IMR-90 (cell line): ENCODE measurements at regions of chr14 and their contacts with region 1.

Region 1: DNA sequence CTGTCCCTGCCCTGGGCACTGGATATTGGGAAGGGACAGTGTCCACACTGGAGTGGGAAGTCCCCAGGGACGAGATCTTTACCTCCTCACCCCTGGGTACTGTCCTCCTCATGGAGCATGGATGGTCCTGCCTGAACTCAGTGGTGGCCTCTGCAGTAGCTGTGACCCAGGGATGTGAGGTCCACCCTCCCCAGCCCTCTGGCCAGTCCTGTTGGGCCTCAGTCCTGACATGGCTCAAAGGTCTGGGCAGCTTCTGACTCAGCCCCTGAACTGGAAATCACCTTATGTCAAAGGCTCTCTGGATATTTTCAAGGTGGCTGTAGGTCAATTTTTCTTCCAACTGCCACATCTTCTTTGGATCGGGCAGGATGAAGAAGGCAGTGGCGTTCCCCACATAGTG is 24.4 kb downstream of the SERPINA1 start:
- DNase-seq: no peak
- ATAC-seq: no peak
- H3K4me3 ChIP-seq: no peak overlapping the region
- H3K27ac ChIP-seq: no peak overlapping the region
- H3K4me1 ChIP-seq: no peaks in the 10 kb centered on the region
- H3K27me3 ChIP-seq: no peaks in the 10 kb centered on the region; the same call in 1 of the 2 replicates
- CTCF ChIP-seq: no peak
- POLR2A ChIP-seq: no peak
- RAD21 ChIP-seq: no peak

Region 2: DNA sequence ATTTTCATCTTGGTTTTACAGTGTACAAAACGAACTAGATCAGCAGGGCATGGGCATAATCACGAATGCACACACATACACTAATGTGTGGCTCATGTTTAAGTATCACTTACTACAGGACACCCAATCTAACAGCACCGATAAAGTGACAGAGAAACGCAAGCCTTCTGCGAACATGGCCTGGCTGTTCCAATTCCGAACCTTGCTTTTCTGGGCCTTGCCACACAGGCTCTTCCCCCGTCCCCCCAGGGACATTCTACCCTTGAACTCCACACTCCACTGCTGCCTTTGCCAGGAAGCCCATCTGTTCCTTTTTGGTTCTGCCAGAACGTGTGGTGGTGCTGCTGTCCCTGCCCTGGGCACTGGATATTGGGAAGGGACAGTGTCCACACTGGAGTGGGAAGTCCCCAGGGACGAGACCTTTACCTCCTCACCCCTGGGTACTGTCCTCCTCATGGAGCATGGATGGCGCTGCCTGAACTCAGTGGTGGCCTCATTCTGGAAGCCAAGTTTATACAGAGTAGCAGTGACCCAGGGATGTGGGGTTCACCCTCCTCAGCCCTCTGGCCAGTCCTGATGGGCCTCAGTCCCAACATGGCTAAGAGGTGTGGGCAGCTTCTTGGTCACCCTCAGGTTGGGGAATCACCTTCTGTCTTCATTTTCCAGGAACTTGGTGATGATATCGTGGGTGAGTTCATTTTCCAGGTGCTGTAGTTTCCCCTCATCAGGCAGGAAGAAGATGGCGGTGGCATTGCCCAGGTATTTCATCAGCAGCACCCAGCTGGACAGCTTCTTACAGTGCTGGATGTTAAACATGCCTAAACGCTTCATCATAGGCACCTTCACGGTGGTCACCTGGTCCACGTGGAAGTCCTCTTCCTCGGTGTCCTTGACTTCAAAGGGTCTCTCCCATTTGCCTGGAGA is 16.4 kb after region 1 on chr14:
- CTCF ChIA-PET with region 1: no interaction called
- POLR2A ChIA-PET with region 1: no interaction called
- dilution Hi-C with region 1: no loop called
- in situ Hi-C with region 1: no loop called
- intact Hi-C with region 1: loop called (anchors 1 kb)
- DNase-seq: no peak
- ATAC-seq: no peak
- H3K4me3 ChIP-seq: no peak overlapping the region
- H3K27ac ChIP-seq: no peak overlapping the region
- H3K4me1 ChIP-seq: no peaks in the 10 kb centered on the region
- H3K27me3 ChIP-seq: no peaks in the 10 kb centered on the region; the same call in 1 of the 2 replicates
- CTCF ChIP-seq: no peak
- POLR2A ChIP-seq: no peak
- RAD21 ChIP-seq: no peak